ENCODE measurements at regions of chr3 and their contacts with region 1.

Region 1: DNA sequence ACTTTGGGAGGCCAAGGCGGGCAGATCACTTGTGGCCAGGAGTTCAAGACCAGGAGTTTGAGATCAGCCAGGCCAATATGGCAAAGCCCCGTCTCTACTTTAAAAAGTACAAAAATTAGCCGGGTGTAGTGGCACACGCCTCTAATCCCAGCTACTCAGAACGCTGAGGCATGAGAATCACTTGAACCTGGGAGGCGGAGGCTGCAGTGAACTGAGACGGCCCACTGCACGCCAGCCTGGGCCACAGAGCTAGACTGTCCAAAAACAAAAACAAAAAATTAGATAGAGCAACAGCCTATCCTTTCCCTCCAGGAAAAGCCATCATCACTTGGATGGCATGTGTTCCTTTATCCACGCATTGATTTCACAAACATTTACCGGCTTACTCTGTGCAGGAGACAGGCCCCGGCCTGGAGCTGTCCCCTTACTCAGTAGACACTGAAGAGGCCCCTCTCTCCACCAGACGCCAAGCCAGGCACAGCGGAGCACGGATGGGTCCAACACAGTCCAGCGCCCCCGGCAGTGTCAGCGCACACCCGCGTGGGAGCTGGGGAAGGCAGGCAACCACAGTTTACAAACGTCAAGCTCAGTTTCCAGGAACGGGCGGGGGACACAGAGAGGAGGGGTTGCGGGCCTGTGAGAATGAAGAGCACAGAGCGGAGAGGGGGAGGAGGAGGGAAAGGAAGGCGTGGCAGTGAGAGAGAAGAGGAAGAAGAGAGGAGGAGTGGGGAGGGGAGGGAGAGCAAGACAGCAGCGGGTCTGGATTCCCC is 3.1 kb downstream of the GP5 start:
- DNase-seq: peak in 4 of 5 donors; percentile 82 to 91 (median 88)
- H3K4me3 ChIP-seq: peak overlapping the region in 2 of 3 donors; percentile 25 to 57
- H3K27ac ChIP-seq: peak overlapping the region; percentile 72
- H3K4me1 ChIP-seq: peaks cover 0 to 9% (median 0%) of the 10 kb centered on the region in 3 donors
- H3K27me3 ChIP-seq: peaks cover 8% of the 10 kb centered on the region
- CTCF ChIP-seq: no peak

Region 2: DNA sequence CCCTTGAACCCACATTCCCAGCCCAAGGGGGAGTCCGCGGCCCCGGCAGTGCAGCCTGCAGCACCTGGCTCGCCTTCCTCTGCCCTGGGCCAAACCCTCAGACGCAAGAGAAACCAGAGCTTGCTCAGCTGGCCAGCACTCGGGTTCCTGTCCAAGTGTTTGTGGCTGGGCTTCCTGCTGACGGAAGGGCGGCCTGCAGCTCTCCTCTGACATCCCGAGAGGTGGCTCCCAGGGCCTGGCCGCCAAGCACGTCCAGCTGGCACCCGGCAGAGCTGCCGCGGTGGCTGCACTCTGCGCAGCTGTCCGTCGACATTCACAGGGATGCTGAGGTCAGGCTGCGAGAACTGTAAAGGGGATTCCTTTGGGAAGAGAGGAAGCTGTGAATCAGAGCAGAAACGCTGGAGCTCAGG is 130.5 kb before region 1 on chr3:
- intact Hi-C with region 1: no loop called
- DNase-seq: peak; percentile 69 to 92 (median 80)
- H3K4me3 ChIP-seq: no peak overlapping the region
- H3K27ac ChIP-seq: peak overlapping the region in 1 of 2 donors; percentile 52
- H3K4me1 ChIP-seq: peaks cover 0 to 18% (median 11%) of the 10 kb centered on the region in 3 donors
- H3K27me3 ChIP-seq: no peaks in the 10 kb centered on the region
- CTCF ChIP-seq: no peak

Region 3: GRCh38 chr3:194344012-194344411 is 52.0 kb before region 1 on chr3:
- intact Hi-C with region 1: loop called (anchors 10 kb)
- DNase-seq: peak; percentile 82 to 88 (median 83)
- H3K4me3 ChIP-seq: no peak overlapping the region
- H3K27ac ChIP-seq: no peak overlapping the region
- H3K4me1 ChIP-seq: no peaks in the 10 kb centered on the region
- H3K27me3 ChIP-seq: no peaks in the 10 kb centered on the region
- CTCF ChIP-seq: peak; percentile 82

Region 4: GRCh38 chr3:194824701-194825111 is 428.7 kb after region 1 on chr3:
- intact Hi-C with region 1: no loop called
- DNase-seq: no peak
- H3K4me3 ChIP-seq: no peak overlapping the region
- H3K27ac ChIP-seq: no peak overlapping the region
- H3K4me1 ChIP-seq: no peaks in the 10 kb centered on the region
- H3K27me3 ChIP-seq: no peaks in the 10 kb centered on the region
- CTCF ChIP-seq: no peak

Measured in kidney (tissue), 22 donors.